ENCODE measurements at regions of chr16 and their contacts with region 1.

Region 1: GRCh38 chr16:89246903-89247733 is 29.6 kb downstream of the ZNF778 start:
- DNase-seq: peak; percentile 85
- ATAC-seq: peak; percentile 91
- H3K4me3 ChIP-seq: peak overlapping the region; percentile 72 to 82 (median 81)
- H3K27ac ChIP-seq: peak overlapping the region; percentile 92
- H3K4me1 ChIP-seq: peaks cover 57% of the 10 kb centered on the region
- H3K27me3 ChIP-seq: no peaks in the 10 kb centered on the region; a peak in 1 of 5 replicates
- CTCF ChIP-seq: peak; percentile 64
- EP300 ChIP-seq: no peak
- POLR2A ChIP-seq: peak; percentile 29 to 65
- RAD21 ChIP-seq: peak; percentile 33; the same call in 1 of the 2 replicates

Region 2: GRCh38 chr16:89132291-89133005 is 114.7 kb before region 1 on chr16:
- CTCF ChIA-PET with region 1: no interaction called
- POLR2A ChIA-PET with region 1: no interaction called
- in situ Hi-C with region 1: no loop called
- intact Hi-C with region 1: no loop called
- DNase-seq: no peak
- ATAC-seq: no peak; the same call in 2 of the 3 replicates
- H3K4me3 ChIP-seq: no peak overlapping the region
- H3K27ac ChIP-seq: no peak overlapping the region
- H3K4me1 ChIP-seq: no peaks in the 10 kb centered on the region
- H3K27me3 ChIP-seq: no peaks in the 10 kb centered on the region
- CTCF ChIP-seq: peak; percentile 20
- EP300 ChIP-seq: no peak
- POLR2A ChIP-seq: no peak
- RAD21 ChIP-seq: no peak

Region 3: GRCh38 chr16:89193021-89193575 is 54.0 kb before region 1 on chr16:
- CTCF ChIA-PET with region 1: no interaction called
- POLR2A ChIA-PET with region 1: interaction called, 22 read pairs
- in situ Hi-C with region 1: no loop called
- intact Hi-C with region 1: no loop called
- DNase-seq: peak; percentile 70
- ATAC-seq: peak; percentile 1; the same call in 2 of the 3 replicates
- H3K4me3 ChIP-seq: no peak overlapping the region
- H3K27ac ChIP-seq: peak overlapping the region; percentile 53
- H3K4me1 ChIP-seq: peaks cover 50% of the 10 kb centered on the region
- H3K27me3 ChIP-seq: no peaks in the 10 kb centered on the region; a peak in 1 of 5 replicates
- CTCF ChIP-seq: no peak
- EP300 ChIP-seq: no peak
- POLR2A ChIP-seq: no peak
- RAD21 ChIP-seq: no peak

Region 4: GRCh38 chr16:89201439-89202377 is 45.4 kb before region 1 on chr16:
- CTCF ChIA-PET with region 1: no interaction called
- POLR2A ChIA-PET with region 1: interaction called, 17 read pairs
- in situ Hi-C with region 1: no loop called
- intact Hi-C with region 1: no loop called
- DNase-seq: peak; percentile 78
- ATAC-seq: peak; percentile 32
- H3K4me3 ChIP-seq: peak overlapping the region; percentile 62 to 99 (median 92)
- H3K27ac ChIP-seq: peak overlapping the region; percentile 82
- H3K4me1 ChIP-seq: peaks cover 33% of the 10 kb centered on the region
- H3K27me3 ChIP-seq: no peaks in the 10 kb centered on the region; a peak in 1 of 5 replicates
- CTCF ChIP-seq: no peak
- EP300 ChIP-seq: no peak
- POLR2A ChIP-seq: peak in 1 of 2 experiments; percentile 91; a peak in 2 of 4 replicates
- RAD21 ChIP-seq: peak; percentile 76

Region 5: DNA sequence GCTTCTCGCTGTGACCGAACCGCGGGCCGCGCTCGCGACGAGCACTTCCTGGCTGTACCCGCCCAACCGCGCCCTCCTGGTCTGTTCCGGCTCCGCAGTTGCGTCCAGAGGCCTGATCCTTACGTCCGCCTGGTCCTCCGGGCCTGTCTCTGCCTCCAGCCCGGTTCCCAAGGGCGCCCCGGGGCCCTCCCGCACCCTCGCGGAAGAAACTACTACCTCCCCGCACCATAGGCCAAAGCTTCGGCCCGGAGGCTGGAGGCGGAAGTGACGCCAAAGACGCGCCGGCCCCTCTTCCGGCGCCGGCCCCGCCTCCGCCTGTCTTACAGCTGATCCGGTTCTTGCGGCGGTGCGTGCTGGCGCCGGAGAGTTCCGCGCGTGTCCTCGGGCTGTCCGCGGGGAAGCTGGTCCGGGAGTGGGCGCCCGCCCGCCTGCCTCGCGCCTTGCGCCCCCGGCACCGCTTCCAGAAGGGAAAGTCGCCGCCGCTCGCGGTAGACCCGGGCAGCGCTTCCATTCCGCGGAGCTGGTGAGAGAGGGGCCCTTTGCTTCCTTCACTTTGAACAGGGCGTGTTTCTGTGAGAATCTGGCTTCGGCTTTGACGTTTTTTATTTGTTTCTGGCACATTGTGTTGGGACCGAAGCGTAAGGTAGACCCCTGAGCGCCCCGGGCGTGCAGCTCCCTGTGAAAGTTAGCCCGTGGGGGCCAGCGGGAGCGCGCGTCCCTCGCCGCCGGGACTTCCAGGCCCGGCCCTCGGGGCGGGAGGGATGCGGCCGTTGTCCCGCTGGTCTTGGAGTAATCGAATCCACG is 29.5 kb before region 1 on chr16 and contains the start of gene ZNF778:
- CTCF ChIA-PET with region 1: no interaction called
- POLR2A ChIA-PET with region 1: interaction called, 19 read pairs
- in situ Hi-C with region 1: no loop called
- intact Hi-C with region 1: no loop called
- DNase-seq: peak; percentile 77
- ATAC-seq: peak; percentile 92
- H3K4me3 ChIP-seq: peak within 1 kb of the TSS; percentile 89 to 96 (median 92)
- H3K27ac ChIP-seq: peak within 1 kb of the TSS; percentile 85
- H3K4me1 ChIP-seq: peaks cover 10% of the 10 kb centered on the region; the same call in 1 of the 2 replicates
- H3K27me3 ChIP-seq: no peaks in the 10 kb centered on the region; a peak in 1 of 5 replicates
- CTCF ChIP-seq: peak; percentile 24
- EP300 ChIP-seq: peak in 1 of 2 experiments; percentile 59; a peak in 1 of 4 replicates
- POLR2A ChIP-seq: peak; percentile 84 to 91
- RAD21 ChIP-seq: peak; percentile 65
- total RNA-seq, gene ZNF778: 7.2 and 9.3 TPM in 2 replicates

Region 6: DNA sequence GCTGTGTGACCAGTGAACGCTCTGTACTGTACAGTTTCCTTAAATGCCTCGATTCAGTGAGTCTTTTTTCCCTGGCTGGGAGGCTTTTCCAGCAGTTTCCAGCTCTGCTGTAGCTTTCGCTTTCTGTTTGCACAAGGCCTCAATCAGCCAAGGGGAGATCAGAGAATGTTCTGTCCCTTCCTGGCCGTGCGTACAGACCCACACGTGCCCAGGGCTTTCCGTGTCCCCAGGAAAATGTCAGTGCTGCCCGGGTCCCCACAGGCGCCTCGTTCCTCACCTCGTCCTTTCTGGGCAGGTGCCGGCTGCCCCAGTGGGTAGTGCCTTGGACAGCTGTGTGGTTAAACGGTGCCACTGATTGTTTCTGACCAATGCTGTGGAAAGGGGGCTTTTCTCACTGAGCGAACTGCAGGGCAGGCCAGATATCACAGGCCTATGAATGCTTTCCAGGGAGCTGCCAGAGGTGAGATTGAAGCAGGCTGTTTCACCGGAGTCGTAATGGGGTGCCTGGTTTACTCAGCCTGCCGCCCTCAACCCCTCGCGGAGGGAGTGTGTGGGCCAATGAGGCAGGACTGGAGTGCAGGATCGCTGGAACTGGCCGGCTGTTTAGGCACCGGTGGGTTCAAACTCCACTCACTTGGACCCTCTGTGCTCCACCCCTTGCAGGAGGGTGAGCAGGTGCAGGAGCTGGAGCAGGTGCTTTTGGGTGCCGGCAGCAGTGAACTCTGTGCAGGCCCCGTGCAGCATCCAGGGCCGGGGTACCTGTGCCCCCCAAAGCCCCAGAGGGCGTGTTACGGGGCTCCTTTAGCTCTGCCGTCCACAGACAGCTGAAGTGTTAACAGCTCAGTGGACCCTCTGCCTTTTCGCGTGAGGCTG is 14.8 kb after region 1 on chr16:
- CTCF ChIA-PET with region 1: no interaction called
- POLR2A ChIA-PET with region 1: interaction called, 78 read pairs
- in situ Hi-C with region 1: no loop called
- intact Hi-C with region 1: no loop called
- DNase-seq: peak; percentile 62
- ATAC-seq: peak; percentile 78
- H3K4me3 ChIP-seq: peak overlapping the region; percentile 65 to 77 (median 66)
- H3K27ac ChIP-seq: peak overlapping the region; percentile 75
- H3K4me1 ChIP-seq: peaks cover 30% of the 10 kb centered on the region
- H3K27me3 ChIP-seq: no peaks in the 10 kb centered on the region
- CTCF ChIP-seq: 0 out of 2 replicates have a peak, but pooled peaks have one; percentile 8
- EP300 ChIP-seq: no peak
- POLR2A ChIP-seq: peak; percentile 65 to 66
- RAD21 ChIP-seq: 0 out of 2 replicates have a peak, but pooled peaks have one; percentile 13

Region 7: DNA sequence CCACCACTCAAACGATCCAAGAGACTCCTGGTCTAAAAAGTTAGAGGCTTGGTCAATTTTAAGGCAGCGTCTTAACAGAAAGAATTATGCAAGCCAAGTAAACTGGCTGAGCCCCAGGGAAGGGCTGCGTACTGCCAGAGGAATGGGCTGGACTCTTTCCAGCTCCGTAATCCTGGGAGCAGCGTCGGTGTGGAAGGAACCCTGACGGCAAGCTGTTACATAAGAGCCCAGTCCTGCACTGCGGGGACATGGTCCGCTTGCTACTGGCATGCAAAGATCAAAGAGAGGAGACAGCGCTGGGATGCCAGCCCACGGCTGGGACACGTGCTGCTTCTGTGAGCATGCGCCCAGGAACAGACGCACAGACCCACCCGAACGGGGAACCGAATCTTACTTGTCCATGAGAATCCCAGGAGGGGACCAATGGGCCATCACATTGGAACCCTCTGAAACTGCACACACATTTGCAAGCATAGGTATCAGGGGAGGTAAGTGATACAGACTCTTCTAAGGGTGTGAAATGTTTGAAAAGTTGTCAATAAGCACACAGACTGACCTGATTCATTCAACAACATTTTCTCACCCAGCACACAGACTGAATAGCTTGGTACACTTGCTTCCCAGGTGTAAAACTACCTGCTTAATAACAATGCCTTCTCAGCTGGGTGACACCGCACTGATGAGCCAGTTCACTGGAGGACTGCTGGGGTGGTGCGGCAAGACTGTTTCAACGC is 148.2 kb after region 1 on chr16:
- CTCF ChIA-PET with region 1: no interaction called
- POLR2A ChIA-PET with region 1: no interaction called
- in situ Hi-C with region 1: no loop called
- intact Hi-C with region 1: loop called (anchors 1 kb)
- DNase-seq: peak; percentile 97
- ATAC-seq: peak; percentile 91
- H3K4me3 ChIP-seq: peak overlapping the region in 1 of 3 experiments; percentile 27; a peak in 2 of 6 replicates
- H3K27ac ChIP-seq: peak overlapping the region; percentile 65
- H3K4me1 ChIP-seq: peaks cover 51% of the 10 kb centered on the region
- H3K27me3 ChIP-seq: no peaks in the 10 kb centered on the region
- CTCF ChIP-seq: peak; percentile 26; the same call in 1 of the 2 replicates
- EP300 ChIP-seq: peak; percentile 92 to 93
- POLR2A ChIP-seq: no peak
- RAD21 ChIP-seq: peak; percentile 58